K562 (cell line): ENCODE measurements at regions of chr5 and their contacts with region 1.

Region 1: GRCh38 chr5:151825445-151825844 is 53.7 kb downstream of the G3BP1 start:
- DNase-seq: peak; percentile 53 to 65 (median 59)
- ATAC-seq: peak; percentile 93
- H3K4me3 ChIP-seq: no peak overlapping the region
- H3K27ac ChIP-seq: no peak overlapping the region
- H3K4me1 ChIP-seq: no peaks in the 10 kb centered on the region
- H3K27me3 ChIP-seq: no peaks in the 10 kb centered on the region
- CTCF ChIP-seq: peak; percentile 73 to 90 (median 79)
- EP300 ChIP-seq: no peak
- POLR2A ChIP-seq: no peak
- RAD21 ChIP-seq: peak; percentile 56 to 76

Region 2: GRCh38 chr5:152142840-152143469 is 317.5 kb after region 1 on chr5:
- CTCF ChIA-PET with region 1: interaction called, 9 read pairs
- POLR2A ChIA-PET with region 1: interaction called, 3 read pairs
- in situ Hi-C with region 1: loop called (anchors 25 kb)
- intact Hi-C with region 1: loop called (anchors 1 kb)
- DNase-seq: peak; percentile 70 to 78 (median 73)
- ATAC-seq: peak; percentile 98
- H3K4me3 ChIP-seq: no peak overlapping the region
- H3K27ac ChIP-seq: no peak overlapping the region
- H3K4me1 ChIP-seq: no peaks in the 10 kb centered on the region
- H3K27me3 ChIP-seq: no peaks in the 10 kb centered on the region
- CTCF ChIP-seq: peak; percentile 69 to 91 (median 76)
- EP300 ChIP-seq: no peak
- POLR2A ChIP-seq: no peak
- RAD21 ChIP-seq: peak; percentile 42 to 66; a peak in 3 of 4 replicates

Region 3: GRCh38 chr5:152349683-152350526 is 524.5 kb after region 1 on chr5:
- CTCF ChIA-PET with region 1: no interaction called
- POLR2A ChIA-PET with region 1: no interaction called
- in situ Hi-C with region 1: no loop called
- intact Hi-C with region 1: loop called (anchors 10 kb)
- DNase-seq: peak; percentile 9 to 35 (median 30)
- ATAC-seq: peak; percentile 70
- H3K4me3 ChIP-seq: no peak overlapping the region
- H3K27ac ChIP-seq: no peak overlapping the region
- H3K4me1 ChIP-seq: no peaks in the 10 kb centered on the region
- H3K27me3 ChIP-seq: no peaks in the 10 kb centered on the region
- CTCF ChIP-seq: peak; percentile 37 to 67 (median 50); a peak in 5 of 6 replicates
- EP300 ChIP-seq: no peak
- POLR2A ChIP-seq: no peak
- RAD21 ChIP-seq: peak in 1 of 2 experiments; percentile 44; a peak in 2 of 4 replicates

Region 4: GRCh38 chr5:152505442-152506042 is 680.1 kb after region 1 on chr5:
- CTCF ChIA-PET with region 1: no interaction called
- POLR2A ChIA-PET with region 1: no interaction called
- in situ Hi-C with region 1: loop called (anchors 10 kb)
- intact Hi-C with region 1: loop called (anchors 1 kb)
- DNase-seq: peak; percentile 9 to 53 (median 16)
- ATAC-seq: peak; percentile 85
- H3K4me3 ChIP-seq: no peak overlapping the region
- H3K27ac ChIP-seq: no peak overlapping the region
- H3K4me1 ChIP-seq: no peaks in the 10 kb centered on the region
- H3K27me3 ChIP-seq: no peaks in the 10 kb centered on the region
- CTCF ChIP-seq: peak in 2 of 3 experiments; percentile 52 to 55; a peak in 4 of 6 replicates
- EP300 ChIP-seq: no peak
- POLR2A ChIP-seq: no peak
- RAD21 ChIP-seq: peak; percentile 30 to 57